IMR-90 (cell line): ENCODE measurements at regions of chr21 and their contacts with region 1.

Region 1: DNA sequence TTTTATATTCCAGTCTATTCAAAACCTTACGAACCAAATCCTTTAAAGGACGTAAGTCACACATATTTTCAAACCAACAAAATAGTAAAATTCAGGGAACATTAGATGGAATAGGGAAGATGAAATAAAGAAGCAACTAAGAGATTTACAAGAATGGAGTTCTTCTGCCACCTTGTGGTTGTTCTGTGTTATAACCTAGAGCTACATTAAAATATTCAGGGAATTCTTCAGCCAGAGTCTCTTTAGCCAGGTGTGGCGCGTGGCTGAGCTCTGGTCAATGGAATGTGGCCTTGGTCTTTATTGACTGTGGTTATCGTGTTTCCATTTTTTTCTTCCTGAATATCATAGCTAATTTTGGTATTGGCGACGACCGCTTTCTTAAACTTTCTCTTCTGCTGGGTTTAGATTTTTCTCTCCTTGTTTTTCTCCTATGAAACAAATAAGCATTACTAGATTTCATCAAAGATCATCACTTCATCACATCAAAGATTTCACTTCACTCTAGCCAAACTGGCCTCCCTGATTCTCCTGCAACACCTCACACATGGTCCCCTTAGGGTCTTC is 221.3 kb downstream of the MRPL39 start:
- DNase-seq: peak; percentile 77
- ATAC-seq: peak; percentile 84
- H3K4me3 ChIP-seq: no peak overlapping the region
- H3K27ac ChIP-seq: no peak overlapping the region
- H3K4me1 ChIP-seq: no peaks in the 10 kb centered on the region
- H3K27me3 ChIP-seq: no peaks in the 10 kb centered on the region
- CTCF ChIP-seq: peak; percentile 85
- POLR2A ChIP-seq: no peak
- RAD21 ChIP-seq: peak; percentile 90

Region 2: GRCh38 chr21:24118738-24119459 is 1267.1 kb before region 1 on chr21:
- CTCF ChIA-PET with region 1: no interaction called
- POLR2A ChIA-PET with region 1: no interaction called
- dilution Hi-C with region 1: no loop called
- in situ Hi-C with region 1: no loop called
- intact Hi-C with region 1: loop called (anchors 10 kb)
- DNase-seq: peak; percentile 65
- ATAC-seq: peak; percentile 87
- H3K4me3 ChIP-seq: no peak overlapping the region; the same call in 1 of the 2 replicates
- H3K27ac ChIP-seq: peak overlapping the region; percentile 85
- H3K4me1 ChIP-seq: no peaks in the 10 kb centered on the region
- H3K27me3 ChIP-seq: no peaks in the 10 kb centered on the region
- CTCF ChIP-seq: no peak
- POLR2A ChIP-seq: no peak
- RAD21 ChIP-seq: no peak

Region 3: DNA sequence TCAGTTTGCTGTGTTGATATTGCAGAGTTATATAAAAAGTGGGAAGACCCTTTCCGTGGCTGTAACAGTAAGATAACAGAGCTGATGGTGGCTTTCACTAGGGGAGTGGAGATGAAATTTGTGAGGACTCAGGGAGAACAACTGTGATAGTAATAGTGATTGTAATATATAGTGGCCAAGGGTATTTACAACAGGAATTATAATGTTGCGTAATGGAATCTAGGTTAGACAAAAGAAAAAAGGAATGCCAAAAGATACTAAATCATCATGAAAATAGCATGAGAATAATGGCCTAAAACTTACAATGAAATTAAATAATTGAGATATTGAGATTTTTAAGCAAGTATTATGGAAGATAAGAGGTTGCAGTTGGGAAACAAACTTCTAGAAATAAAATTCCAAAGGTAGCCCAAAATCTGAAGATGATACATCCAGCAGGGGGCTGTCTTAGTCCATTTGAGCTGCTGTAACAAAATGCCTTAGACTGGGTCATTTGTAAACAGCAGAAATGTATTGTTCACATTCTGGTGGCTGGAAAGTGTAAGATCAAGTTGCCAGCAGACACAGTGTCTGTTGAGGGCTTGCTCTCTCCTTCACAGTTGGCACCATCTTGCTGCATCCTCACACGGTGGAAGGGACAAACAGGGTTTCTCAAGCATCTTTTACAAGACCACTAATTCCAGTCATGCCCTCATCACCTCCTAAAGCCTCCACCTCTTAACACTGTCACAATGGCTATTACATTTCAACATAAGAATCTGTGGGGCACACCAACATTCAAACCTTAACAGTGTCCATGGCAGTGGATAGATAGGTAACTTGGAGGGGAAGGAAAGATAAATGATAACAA is 489.9 kb before region 1 on chr21:
- CTCF ChIA-PET with region 1: no interaction called
- POLR2A ChIA-PET with region 1: no interaction called
- dilution Hi-C with region 1: no loop called
- in situ Hi-C with region 1: no loop called
- intact Hi-C with region 1: loop called (anchors 1 kb)
- DNase-seq: peak; percentile 25
- ATAC-seq: peak; percentile 66; the same call in 1 of the 2 replicates
- H3K4me3 ChIP-seq: no peak overlapping the region
- H3K27ac ChIP-seq: no peak overlapping the region
- H3K4me1 ChIP-seq: no peaks in the 10 kb centered on the region
- H3K27me3 ChIP-seq: no peaks in the 10 kb centered on the region
- CTCF ChIP-seq: peak; percentile 43
- POLR2A ChIP-seq: no peak
- RAD21 ChIP-seq: peak; percentile 64

Region 4: GRCh38 chr21:25313829-25314228 is 72.2 kb before region 1 on chr21:
- CTCF ChIA-PET with region 1: interaction called, 4 read pairs
- POLR2A ChIA-PET with region 1: no interaction called
- dilution Hi-C with region 1: no loop called
- in situ Hi-C with region 1: no loop called
- intact Hi-C with region 1: loop called (anchors 2 kb)
- DNase-seq: peak; percentile 67
- ATAC-seq: peak; percentile 85
- H3K4me3 ChIP-seq: no peak overlapping the region
- H3K27ac ChIP-seq: no peak overlapping the region
- H3K4me1 ChIP-seq: peaks cover 1% of the 10 kb centered on the region; the same call in 1 of the 2 replicates
- H3K27me3 ChIP-seq: no peaks in the 10 kb centered on the region
- CTCF ChIP-seq: peak; percentile 68
- POLR2A ChIP-seq: no peak
- RAD21 ChIP-seq: peak; percentile 75